Thyroid gland (tissue), 4 donors: ENCODE measurements at regions of chr19 and their contacts with region 1.

Region 1: GRCh38 chr19:56572589-56572988 is 5.3 kb downstream of the ZNF470 start:
- DNase-seq: no peak
- H3K4me3 ChIP-seq: no peak overlapping the region
- H3K27ac ChIP-seq: no peak overlapping the region
- H3K4me1 ChIP-seq: peaks cover 7 to 8% of the 10 kb centered on the region in 2 donors
- H3K27me3 ChIP-seq: no peaks in the 10 kb centered on the region
- CTCF ChIP-seq: no peak
- POLR2A ChIP-seq: no peak

Region 2: DNA sequence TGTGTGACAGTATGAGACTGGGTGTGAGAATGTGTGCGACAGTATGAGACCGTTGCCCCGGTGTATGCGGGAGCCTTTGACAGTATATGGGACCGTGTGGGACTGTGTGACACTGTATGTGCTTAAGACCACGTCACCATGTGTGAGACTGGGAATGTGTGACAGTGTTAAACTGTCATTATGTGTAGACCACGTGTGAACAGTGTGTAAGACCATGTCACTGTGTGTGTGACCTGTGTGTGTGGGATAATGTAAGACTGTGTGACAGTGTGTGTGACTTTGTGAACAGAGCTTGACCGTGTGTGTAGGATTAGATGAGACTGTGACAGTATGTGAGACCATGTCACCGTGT is 167.9 kb before region 1 on chr19:
- intact Hi-C with region 1: loop called (anchors 5 kb)
- DNase-seq: no peak
- H3K4me3 ChIP-seq: peak overlapping the region in 2 of 3 donors; percentile 68 to 74
- H3K27ac ChIP-seq: no peak overlapping the region
- H3K4me1 ChIP-seq: peaks cover 11 to 16% of the 10 kb centered on the region in 2 donors
- H3K27me3 ChIP-seq: no peaks in the 10 kb centered on the region
- CTCF ChIP-seq: no peak
- POLR2A ChIP-seq: no peak

Region 3: GRCh38 chr19:56837004-56837403 is 264.4 kb after region 1 on chr19:
- intact Hi-C with region 1: no loop called
- DNase-seq: peak; percentile 31 to 58
- H3K4me3 ChIP-seq: no peak overlapping the region
- H3K27ac ChIP-seq: peak overlapping the region; percentile 17 to 92 (median 63)
- H3K4me1 ChIP-seq: peaks cover 0 to 3% of the 10 kb centered on the region in 2 donors
- H3K27me3 ChIP-seq: no peaks in the 10 kb centered on the region
- CTCF ChIP-seq: no peak
- POLR2A ChIP-seq: no peak